Activated T-helper 1 cell treated with anti-CD3 and anti-CD28 coated beads, Interleukin-12 subunit alpha, Interleukin-12 subunit beta, Interleukin-2, Interleukin-4 antibody, amounts not matched to agents 30 ng/mL and 10 ng/mL and 1 ng/mL, durations not matched to agents 14 hours and 24 hours and 36 hours (primary cell): ENCODE measurements at regions of chr12 and their contacts with region 1.

Region 1: GRCh38 chr12:75511116-75512048 is at the start of gene KRR1:
- DNase-seq: peak; percentile 89
- H3K4me3 Mint-ChIP-seq: peak within 1 kb of the TSS; percentile 97
- H3K27ac Mint-ChIP-seq: peak within 1 kb of the TSS; percentile 98
- H3K4me1 Mint-ChIP-seq: peaks cover 45% of the 10 kb centered on the region
- H3K27me3 Mint-ChIP-seq: peaks cover 3% of the 10 kb centered on the region
- total RNA-seq, gene KRR1: 130 and 137 TPM in 2 replicates

Region 2: GRCh38 chr12:75489613-75490210 is 21.7 kb before region 1 on chr12:
- intact Hi-C with region 1: loop called (anchors 1 kb)
- DNase-seq: no peak
- H3K4me3 Mint-ChIP-seq: peak overlapping the region; percentile 0
- H3K27ac Mint-ChIP-seq: peak overlapping the region; percentile 64
- H3K4me1 Mint-ChIP-seq: peaks cover 24% of the 10 kb centered on the region
- H3K27me3 Mint-ChIP-seq: no peaks in the 10 kb centered on the region

Region 3: DNA sequence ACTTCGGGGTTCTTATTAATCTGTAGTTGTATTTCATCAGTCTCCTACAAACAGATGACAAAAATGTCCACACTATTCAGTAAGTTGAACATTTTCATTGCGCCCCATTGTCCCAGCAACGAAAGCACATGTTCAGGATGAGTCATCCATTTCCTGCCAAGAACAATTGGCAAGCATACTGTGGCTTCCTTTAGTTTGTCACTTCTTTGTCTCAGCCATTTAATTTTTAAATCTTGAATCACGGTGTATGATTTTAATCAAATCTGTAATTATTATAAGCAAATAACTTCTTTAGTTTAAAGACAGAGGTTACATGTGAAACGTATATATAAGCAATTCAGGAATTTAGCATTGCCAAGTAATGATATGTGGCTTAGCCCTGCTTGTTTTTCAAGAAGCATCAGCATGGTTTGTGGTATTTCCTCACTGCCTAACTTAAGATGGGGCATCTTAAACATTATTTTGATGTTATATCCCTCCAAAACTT is 211.4 kb after region 1 on chr12:
- intact Hi-C with region 1: loop called (anchors 5 kb)
- DNase-seq: peak; percentile 29
- H3K4me3 Mint-ChIP-seq: peak overlapping the region; percentile 37
- H3K27ac Mint-ChIP-seq: peak overlapping the region; percentile 81
- H3K4me1 Mint-ChIP-seq: peaks cover 16% of the 10 kb centered on the region
- H3K27me3 Mint-ChIP-seq: peaks cover 3% of the 10 kb centered on the region

Region 4: GRCh38 chr12:75892731-75893408 is 381.5 kb after region 1 on chr12:
- intact Hi-C with region 1: no loop called
- DNase-seq: no peak
- H3K4me3 Mint-ChIP-seq: no peak overlapping the region
- H3K27ac Mint-ChIP-seq: no peak overlapping the region
- H3K4me1 Mint-ChIP-seq: peaks cover 9% of the 10 kb centered on the region
- H3K27me3 Mint-ChIP-seq: peaks cover 42% of the 10 kb centered on the region

Region 5: GRCh38 chr12:76037130-76038103 is 526.0 kb after region 1 on chr12:
- intact Hi-C with region 1: loop called (anchors 1 kb)
- DNase-seq: peak; percentile 26
- H3K4me3 Mint-ChIP-seq: no peak overlapping the region
- H3K27ac Mint-ChIP-seq: peak overlapping the region; percentile 0
- H3K4me1 Mint-ChIP-seq: peaks cover 24% of the 10 kb centered on the region
- H3K27me3 Mint-ChIP-seq: no peaks in the 10 kb centered on the region